ENCODE measurements at regions of chr3 and their contacts with region 1.

Region 1: DNA sequence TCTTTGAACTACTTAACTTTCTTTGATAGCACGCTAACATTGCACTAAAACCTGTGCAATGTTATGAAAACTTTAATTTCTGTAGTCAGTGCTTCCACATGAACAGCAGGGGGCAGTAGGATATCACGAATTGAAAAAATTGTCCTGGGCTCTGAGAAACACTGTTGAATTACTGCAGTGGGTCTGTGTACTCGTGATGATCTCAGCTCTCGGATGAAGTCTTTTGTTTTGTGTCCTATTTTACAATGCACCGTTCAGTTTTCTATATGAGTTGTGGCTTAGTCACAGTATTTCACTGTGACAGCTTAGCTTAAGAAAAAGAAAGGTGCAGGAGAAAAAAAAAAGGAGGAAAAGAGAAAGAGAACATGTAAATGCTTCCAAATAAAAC is 141.3 kb upstream of the CCDC54 start:
- DNase-seq: peak in 1 of 2 donors; percentile 4
- ATAC-seq: peak; percentile 82 to 85
- H3K4me3 ChIP-seq: peak overlapping the region; percentile 54 to 66 (median 58)
- H3K27ac ChIP-seq: peak overlapping the region; percentile 26 to 42 (median 30)
- H3K4me1 ChIP-seq: peaks cover 7 to 11% of the 10 kb centered on the region in 2 donors
- H3K27me3 ChIP-seq: no peaks in the 10 kb centered on the region
- CTCF ChIP-seq: peak; percentile 71 to 94 (median 87)
- POLR2A ChIP-seq: no peak

Region 2: DNA sequence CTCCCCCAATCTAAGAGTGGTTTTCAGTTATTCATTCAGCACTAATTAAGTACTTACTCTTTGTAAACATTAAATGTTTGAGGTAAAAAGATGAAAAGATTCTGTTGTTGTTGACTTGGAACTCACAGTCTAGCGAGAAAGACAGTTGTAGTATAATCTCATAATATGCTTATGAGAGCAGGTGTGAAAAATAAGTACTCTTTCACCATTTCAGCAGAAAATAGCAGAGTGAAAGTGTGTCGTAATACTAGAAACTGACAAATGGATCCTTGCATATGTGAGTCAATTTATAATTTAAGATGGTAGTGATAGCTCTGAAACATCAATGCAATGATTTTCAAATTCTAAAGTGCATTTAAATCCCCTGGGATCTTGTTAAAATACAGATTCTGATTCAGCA is 477.5 kb before region 1 on chr3:
- in situ Hi-C with region 1: no loop called
- intact Hi-C with region 1: no loop called
- DNase-seq: no peak
- ATAC-seq: no peak
- H3K4me3 ChIP-seq: no peak overlapping the region
- H3K27ac ChIP-seq: no peak overlapping the region
- H3K4me1 ChIP-seq: no peaks in the 10 kb centered on the region
- H3K27me3 ChIP-seq: no peaks in the 10 kb centered on the region
- CTCF ChIP-seq: no peak
- POLR2A ChIP-seq: no peak

Region 3: GRCh38 chr3:106850437-106850836 is 385.5 kb before region 1 on chr3:
- in situ Hi-C with region 1: no loop called
- intact Hi-C with region 1: no loop called
- DNase-seq: no peak
- ATAC-seq: no peak
- H3K4me3 ChIP-seq: no peak overlapping the region
- H3K27ac ChIP-seq: no peak overlapping the region
- H3K4me1 ChIP-seq: no peaks in the 10 kb centered on the region
- H3K27me3 ChIP-seq: no peaks in the 10 kb centered on the region
- CTCF ChIP-seq: no peak
- POLR2A ChIP-seq: no peak

Region 4: GRCh38 chr3:107206141-107206540 is 29.8 kb before region 1 on chr3:
- in situ Hi-C with region 1: no loop called
- intact Hi-C with region 1: loop called (anchors 1 kb)
- DNase-seq: no peak
- ATAC-seq: peak in 1 of 2 donors; percentile 40
- H3K4me3 ChIP-seq: no peak overlapping the region
- H3K27ac ChIP-seq: peak overlapping the region in 2 of 4 donors; percentile 69 to 80
- H3K4me1 ChIP-seq: peaks cover 30 to 35% of the 10 kb centered on the region in 2 donors
- H3K27me3 ChIP-seq: no peaks in the 10 kb centered on the region
- CTCF ChIP-seq: peak in 4 of 5 experiments; percentile 40 to 66 (median 46)
- POLR2A ChIP-seq: no peak

Region 5: DNA sequence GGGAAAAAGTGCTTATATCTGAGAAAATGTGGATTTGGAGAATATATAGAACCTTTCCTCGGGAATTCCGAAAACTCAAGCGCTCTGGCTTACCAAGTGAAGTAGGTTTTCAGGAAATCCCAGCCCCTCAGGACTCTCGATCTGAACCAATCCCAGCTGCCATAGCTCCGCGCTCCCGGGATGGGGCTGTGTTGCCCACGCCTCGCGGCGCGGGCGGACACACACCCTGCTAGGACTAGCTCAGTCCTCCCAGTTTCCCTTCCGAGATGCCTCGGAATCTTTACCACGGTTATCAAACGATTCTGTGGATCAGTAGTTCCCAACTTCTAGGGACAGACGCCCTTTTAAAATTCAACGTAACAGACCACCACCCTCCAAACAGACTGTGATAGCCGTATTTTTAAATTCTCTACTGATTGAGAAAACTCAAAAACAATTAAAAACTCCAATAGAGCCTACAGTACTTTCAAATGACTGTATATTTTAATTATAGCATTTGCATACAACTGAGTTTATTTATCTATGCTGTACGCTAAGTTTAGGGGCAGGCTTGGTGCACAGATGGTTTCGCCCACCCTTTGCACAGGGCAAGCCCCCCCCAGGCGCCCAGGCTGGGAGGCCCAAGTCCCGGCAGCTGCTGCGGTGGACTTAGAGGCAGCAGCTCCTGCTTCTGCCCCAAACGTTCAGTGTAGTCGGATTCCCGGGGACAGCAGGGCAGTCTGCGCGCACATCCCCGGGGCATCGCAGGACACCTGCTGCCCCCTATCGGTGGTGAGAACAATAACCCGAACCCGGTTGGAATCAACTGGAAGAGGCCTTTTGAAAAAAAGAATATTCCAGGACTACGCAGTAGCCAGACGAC is 193.6 kb after region 1 on chr3:
- in situ Hi-C with region 1: loop called in 1 of 4 experiments (anchors 10 kb)
- intact Hi-C with region 1: loop called (anchors 2 kb)
- DNase-seq: peak; percentile 35 to 53
- ATAC-seq: peak; percentile 73 to 81
- H3K4me3 ChIP-seq: peak overlapping the region; percentile 77 to 89 (median 82)
- H3K27ac ChIP-seq: peak overlapping the region; percentile 23 to 84 (median 58)
- H3K4me1 ChIP-seq: peaks cover 3 to 7% of the 10 kb centered on the region in 2 donors
- H3K27me3 ChIP-seq: no peaks in the 10 kb centered on the region
- CTCF ChIP-seq: peak; percentile 52 to 89 (median 80)
- POLR2A ChIP-seq: no peak

Region 6: GRCh38 chr3:107531917-107532469 is 296.1 kb after region 1 on chr3:
- in situ Hi-C with region 1: loop called in 2 of 4 experiments (anchors 10 kb)
- intact Hi-C with region 1: no loop called
- DNase-seq: no peak
- ATAC-seq: no peak
- H3K4me3 ChIP-seq: no peak overlapping the region
- H3K27ac ChIP-seq: no peak overlapping the region
- H3K4me1 ChIP-seq: no peaks in the 10 kb centered on the region
- H3K27me3 ChIP-seq: no peaks in the 10 kb centered on the region
- CTCF ChIP-seq: no peak
- POLR2A ChIP-seq: no peak

Region 7: GRCh38 chr3:107660306-107660976 is 424.5 kb after region 1 on chr3:
- in situ Hi-C with region 1: loop called in 1 of 4 experiments (anchors 25 kb)
- intact Hi-C with region 1: loop called (anchors 10 kb)
- DNase-seq: no peak
- ATAC-seq: no peak
- H3K4me3 ChIP-seq: no peak overlapping the region
- H3K27ac ChIP-seq: no peak overlapping the region
- H3K4me1 ChIP-seq: peaks cover 19 to 24% of the 10 kb centered on the region in 2 donors
- H3K27me3 ChIP-seq: no peaks in the 10 kb centered on the region
- CTCF ChIP-seq: peak; percentile 14 to 66 (median 31)
- POLR2A ChIP-seq: no peak

Region 8: DNA sequence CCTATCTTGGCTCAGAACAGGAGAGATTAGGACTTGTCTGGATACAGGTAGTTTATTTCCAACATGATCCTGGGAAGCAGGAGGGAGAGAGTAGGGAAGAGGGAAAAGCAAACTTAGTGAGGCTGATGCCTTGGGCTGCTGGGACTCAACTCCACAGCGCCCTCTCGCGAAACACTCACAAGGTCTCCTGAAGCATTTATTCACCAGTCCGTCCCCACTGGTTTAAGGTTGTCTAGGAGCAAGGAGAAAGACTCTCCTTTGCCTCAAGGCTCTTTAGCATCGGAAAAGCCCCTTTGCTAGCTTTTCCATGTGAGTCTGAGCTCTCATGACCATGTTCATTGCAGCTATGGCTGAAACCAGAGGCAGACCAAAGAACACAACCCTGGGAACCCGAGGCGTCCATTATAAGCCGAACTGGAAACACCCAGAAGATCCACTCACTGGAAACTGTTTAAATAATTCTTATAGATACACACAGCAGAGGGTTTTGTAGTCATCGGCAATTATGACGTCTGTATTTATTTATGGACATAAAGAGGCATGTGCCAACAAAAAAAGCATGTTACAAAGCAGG is 610.4 kb after region 1 on chr3:
- in situ Hi-C with region 1: no loop called
- intact Hi-C with region 1: loop called (anchors 10 kb)
- DNase-seq: peak in 1 of 2 donors; percentile 20
- ATAC-seq: no peak
- H3K4me3 ChIP-seq: no peak overlapping the region
- H3K27ac ChIP-seq: no peak overlapping the region
- H3K4me1 ChIP-seq: no peaks in the 10 kb centered on the region
- H3K27me3 ChIP-seq: no peaks in the 10 kb centered on the region
- CTCF ChIP-seq: peak in 3 of 5 experiments; percentile 22 to 41 (median 29)
- POLR2A ChIP-seq: no peak

Region 9: DNA sequence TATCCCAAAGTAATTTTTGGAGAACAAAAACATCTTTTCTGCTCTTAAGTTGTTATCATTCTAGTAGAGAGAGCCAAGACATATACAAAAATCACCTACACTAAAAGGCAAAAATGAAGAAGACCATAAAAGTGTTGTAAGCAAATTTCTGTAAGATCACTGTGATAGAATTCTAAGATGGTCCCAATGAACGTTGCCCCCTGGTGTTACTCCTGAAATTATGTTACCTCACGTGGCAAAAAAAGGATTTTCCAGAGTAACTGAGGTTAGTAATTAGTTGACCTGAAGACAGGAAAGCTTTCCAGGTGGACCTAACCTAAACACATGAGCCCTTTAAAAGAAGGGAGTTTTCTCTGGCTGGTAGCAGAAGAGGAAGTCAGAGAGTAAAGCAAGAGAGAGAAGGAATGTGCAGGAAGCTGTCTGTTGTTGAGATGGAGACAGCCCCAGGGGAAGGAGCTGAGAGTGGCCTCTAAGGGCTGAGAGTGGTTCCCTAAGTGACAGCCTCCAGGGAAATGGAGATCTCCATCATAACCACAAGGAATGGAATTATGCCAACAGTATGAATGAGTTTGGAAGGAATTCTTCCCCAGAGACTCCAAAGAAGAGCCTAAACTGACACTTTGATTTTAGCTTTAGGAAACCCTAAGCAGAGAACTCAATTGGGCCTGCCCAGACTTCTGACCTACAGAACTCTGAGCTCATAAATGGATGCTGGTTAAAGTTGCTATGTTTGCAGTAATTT is 649.0 kb after region 1 on chr3:
- in situ Hi-C with region 1: no loop called
- intact Hi-C with region 1: no loop called
- DNase-seq: no peak
- ATAC-seq: peak; percentile 18 to 52
- H3K4me3 ChIP-seq: no peak overlapping the region
- H3K27ac ChIP-seq: no peak overlapping the region
- H3K4me1 ChIP-seq: no peaks in the 10 kb centered on the region
- H3K27me3 ChIP-seq: no peaks in the 10 kb centered on the region
- CTCF ChIP-seq: no peak
- POLR2A ChIP-seq: no peak

Region 10: GRCh38 chr3:108477511-108478147 is 1241.7 kb after region 1 on chr3:
- in situ Hi-C with region 1: no loop called
- intact Hi-C with region 1: loop called (anchors 5 kb)
- DNase-seq: peak in 1 of 2 donors; percentile 18
- ATAC-seq: peak in 1 of 2 donors; percentile 70
- H3K4me3 ChIP-seq: peak overlapping the region in 1 of 4 donors; percentile 24
- H3K27ac ChIP-seq: no peak overlapping the region
- H3K4me1 ChIP-seq: no peaks in the 10 kb centered on the region
- H3K27me3 ChIP-seq: no peaks in the 10 kb centered on the region
- CTCF ChIP-seq: peak; percentile 23 to 65 (median 45)
- POLR2A ChIP-seq: no peak

Measured in gastrocnemius medialis (tissue), 4 donors.